Left colon (tissue), 2 donors: ENCODE measurements at regions of chr1 and their contacts with region 1.

Region 1: GRCh38 chr1:192609110-192610079 is 26.6 kb upstream of the RGS13 start:
- DNase-seq: peak; percentile 59 to 76
- ATAC-seq: peak; percentile 26

Region 2: DNA sequence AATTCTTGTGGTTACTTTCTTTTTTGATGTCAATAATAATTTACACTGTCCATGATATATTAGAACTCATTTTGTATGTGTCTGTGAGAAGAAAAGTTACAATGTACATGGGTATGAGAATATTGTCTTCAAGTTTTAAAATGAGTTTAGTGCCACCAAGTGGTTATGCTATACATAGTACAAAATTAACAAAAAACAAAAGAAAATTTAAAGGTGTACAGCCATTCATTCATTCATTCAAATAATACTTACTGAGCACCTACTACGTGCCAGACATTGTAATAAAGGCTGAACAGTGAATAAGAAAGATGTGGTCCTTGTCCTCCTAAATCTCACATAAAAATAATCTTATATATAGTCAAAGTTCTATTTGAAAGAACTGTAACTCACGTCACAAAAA is 422.0 kb after region 1 on chr1:
- intact Hi-C with region 1: loop called in 1 of 2 experiments (anchors 10 kb)
- DNase-seq: no peak
- ATAC-seq: peak; percentile 51